Posterior vena cava (tissue), 2 donors: ENCODE measurements at regions of chr20 and their contacts with region 1.

Region 1: GRCh38 chr20:53692413-53693067 is 98.9 kb upstream of the ZNF217 start:
- DNase-seq: peak; percentile 89

Region 2: DNA sequence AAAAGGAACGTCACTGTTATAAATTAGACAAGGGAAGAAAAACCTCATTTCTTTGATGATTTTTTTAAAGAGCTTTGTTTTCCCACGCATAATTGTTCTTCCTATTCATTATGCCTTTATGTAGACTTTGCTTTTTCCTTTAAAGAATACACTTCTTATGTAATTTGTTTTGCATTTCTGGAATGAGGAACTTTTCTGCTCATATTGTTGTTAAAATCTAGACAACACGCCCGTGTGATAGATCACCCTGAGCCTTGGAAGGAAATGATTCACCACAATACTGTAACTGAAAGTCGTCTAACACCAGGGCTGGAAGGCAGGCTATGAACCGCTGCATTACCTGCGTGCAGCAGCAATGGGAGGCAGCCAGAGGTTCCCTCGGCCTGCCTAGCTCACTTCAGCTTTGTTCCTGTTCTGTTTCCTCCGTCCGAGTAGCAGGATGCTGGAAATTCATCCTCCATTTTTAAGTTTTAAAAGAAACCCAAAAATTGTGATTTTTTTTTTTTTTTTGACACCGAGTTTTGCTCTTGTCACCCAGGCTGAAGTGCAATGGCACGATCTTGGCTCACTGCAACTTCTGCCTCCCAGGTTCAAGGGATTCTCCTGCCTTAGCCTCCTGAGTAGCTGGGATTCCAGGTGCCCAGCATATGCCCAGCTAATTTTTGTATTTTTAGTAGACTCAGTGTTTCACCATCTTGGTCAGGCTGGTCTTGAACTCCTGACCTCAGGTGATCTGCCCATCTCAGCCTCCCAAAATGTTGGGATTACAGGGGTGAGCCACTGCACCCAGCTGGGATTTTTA is 49.3 kb before region 1 on chr20:
- intact Hi-C with region 1: no loop called
- DNase-seq: no peak

Region 3: GRCh38 chr20:53839423-53840176 is 147.1 kb after region 1 on chr20:
- intact Hi-C with region 1: no loop called
- DNase-seq: no peak

Region 4: GRCh38 chr20:53915446-53916172 is 223.1 kb after region 1 on chr20:
- intact Hi-C with region 1: loop called in 1 of 2 experiments (anchors 10 kb)
- DNase-seq: peak; percentile 98